B cell (primary cell): ENCODE measurements at regions of chr6 and their contacts with region 1.

Region 1: DNA sequence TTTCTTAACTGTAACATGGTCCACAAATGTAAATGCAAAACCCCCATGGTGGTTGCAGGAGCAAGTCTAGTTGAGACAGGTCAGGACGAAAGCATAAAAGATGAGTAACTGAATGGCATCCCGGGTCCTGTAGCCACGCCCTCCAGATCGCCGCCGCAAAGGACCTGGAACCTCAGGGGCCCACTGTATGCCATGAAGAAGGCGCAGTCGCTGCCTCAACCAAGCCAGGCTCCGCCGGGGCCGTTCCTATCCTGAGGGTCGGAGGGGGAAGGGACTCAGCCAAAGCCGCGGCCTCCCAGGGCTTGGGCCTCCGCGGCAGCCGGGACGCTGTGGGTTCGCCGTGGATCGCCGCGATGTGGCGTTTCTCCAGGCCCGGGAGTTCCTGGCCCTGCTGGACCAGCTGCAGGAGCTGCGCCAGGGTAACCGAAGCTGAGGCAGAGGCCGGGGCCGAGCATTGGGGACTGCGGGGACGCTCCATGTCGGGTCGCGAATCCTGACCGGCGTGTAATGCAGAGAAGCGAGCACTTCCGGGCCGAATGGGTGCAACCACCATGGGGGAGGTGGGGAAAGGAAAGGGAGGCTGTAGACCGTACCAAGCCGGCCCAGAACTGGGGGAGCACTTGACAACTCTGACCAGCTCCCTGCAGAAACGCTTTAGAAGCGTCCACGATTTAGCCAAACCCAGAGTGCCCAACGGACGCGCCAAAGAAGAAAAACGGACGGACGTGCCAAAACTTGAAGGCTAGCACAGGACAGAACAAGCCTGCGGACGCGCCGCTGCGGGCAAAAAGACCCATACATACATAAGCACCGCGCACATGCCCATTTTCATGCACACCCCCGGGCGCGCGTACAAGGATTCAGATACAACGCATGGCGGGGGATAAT is 11.1 kb downstream of the RPL7L1 start:
- DNase-seq: peak; percentile 93
- ATAC-seq: peak; percentile 98
- H3K4me3 ChIP-seq: peak overlapping the region; percentile 76 to 94 (median 87)
- H3K4me3 Mint-ChIP-seq: peak overlapping the region; percentile 92
- H3K27ac ChIP-seq: peak overlapping the region; percentile 77 to 89
- H3K27ac Mint-ChIP-seq: peak overlapping the region; percentile 92
- H3K4me1 ChIP-seq: peaks cover 26 to 33% of the 10 kb centered on the region in 2 donors
- H3K4me1 Mint-ChIP-seq: peaks cover 38% of the 10 kb centered on the region
- H3K27me3 ChIP-seq: no peaks in the 10 kb centered on the region
- H3K27me3 Mint-ChIP-seq: no peaks in the 10 kb centered on the region
- CTCF ChIP-seq: no peak

Region 2: GRCh38 chr6:42043787-42044475 is 846.6 kb before region 1 on chr6:
- CTCF ChIA-PET with region 1: no interaction called
- POLR2A ChIA-PET with region 1: no interaction called
- intact Hi-C with region 1: no loop called
- DNase-seq: peak; percentile 87
- ATAC-seq: peak; percentile 32
- H3K4me3 ChIP-seq: peak overlapping the region in 1 of 5 experiments; percentile 23
- H3K4me3 Mint-ChIP-seq: peak overlapping the region; percentile 69
- H3K27ac ChIP-seq: peak overlapping the region; percentile 26 to 56
- H3K27ac Mint-ChIP-seq: peak overlapping the region; percentile 88
- H3K4me1 ChIP-seq: peaks cover 67 to 80% of the 10 kb centered on the region in 2 donors
- H3K4me1 Mint-ChIP-seq: peaks cover 82% of the 10 kb centered on the region
- H3K27me3 ChIP-seq: no peaks in the 10 kb centered on the region
- H3K27me3 Mint-ChIP-seq: no peaks in the 10 kb centered on the region
- CTCF ChIP-seq: peak; percentile 89

Region 3: DNA sequence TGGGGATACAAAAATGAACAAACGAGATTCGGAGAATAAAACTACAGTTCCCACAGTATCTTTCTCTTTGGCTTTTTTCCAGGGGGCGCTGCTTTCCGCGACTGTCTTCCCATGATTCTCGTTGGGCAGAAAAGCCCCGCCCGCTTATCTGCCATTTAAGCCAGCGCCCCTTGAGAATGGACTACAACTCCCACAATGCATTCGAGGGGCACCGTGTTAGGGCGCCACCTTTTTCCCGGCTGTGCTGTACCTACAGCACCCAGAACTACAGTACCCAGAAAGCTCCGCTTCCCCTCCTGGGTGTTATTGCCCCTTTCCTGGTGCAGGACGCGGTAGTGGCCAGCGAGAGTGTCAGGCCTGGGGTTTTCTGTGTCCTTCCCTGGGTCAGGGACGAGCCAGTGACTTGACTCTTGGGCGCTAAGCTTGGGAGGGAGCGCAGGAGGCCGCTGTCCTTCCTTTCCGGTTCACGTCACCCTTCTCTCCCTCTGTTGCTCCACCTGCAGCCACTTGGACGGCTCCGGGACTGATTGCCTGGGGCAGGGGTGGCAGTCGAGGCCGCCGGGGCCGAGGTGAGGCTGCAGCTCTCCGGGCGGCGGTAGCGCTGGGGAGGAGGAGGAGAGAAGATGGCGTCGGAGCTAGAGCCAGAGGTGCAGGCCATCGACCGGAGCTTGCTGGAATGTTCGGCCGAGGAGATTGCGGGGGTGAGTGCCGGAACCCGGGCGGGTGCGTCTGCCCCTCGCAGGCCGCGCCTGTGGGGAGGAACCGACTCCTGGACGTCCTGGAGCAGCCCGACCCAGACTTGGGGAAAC is 326.7 kb before region 1 on chr6 and contains the start of gene UBR2:
- CTCF ChIA-PET with region 1: no interaction called
- POLR2A ChIA-PET with region 1: no interaction called
- intact Hi-C with region 1: loop called (anchors 5 kb)
- DNase-seq: peak; percentile 95
- ATAC-seq: peak; percentile 96
- H3K4me3 ChIP-seq: peak within 1 kb of the TSS; percentile 78 to 98 (median 91)
- H3K4me3 Mint-ChIP-seq: peak within 1 kb of the TSS; percentile 98
- H3K27ac ChIP-seq: peak within 1 kb of the TSS; percentile 90 to 91
- H3K27ac Mint-ChIP-seq: peak within 1 kb of the TSS; percentile 98
- H3K4me1 ChIP-seq: peaks cover 19 to 25% of the 10 kb centered on the region in 2 donors
- H3K4me1 Mint-ChIP-seq: peaks cover 36% of the 10 kb centered on the region
- H3K27me3 ChIP-seq: no peaks in the 10 kb centered on the region
- H3K27me3 Mint-ChIP-seq: no peaks in the 10 kb centered on the region
- CTCF ChIP-seq: peak; percentile 41
- total RNA-seq, gene UBR2: 56.2 and 61.5 TPM in 2 replicates

Region 4: DNA sequence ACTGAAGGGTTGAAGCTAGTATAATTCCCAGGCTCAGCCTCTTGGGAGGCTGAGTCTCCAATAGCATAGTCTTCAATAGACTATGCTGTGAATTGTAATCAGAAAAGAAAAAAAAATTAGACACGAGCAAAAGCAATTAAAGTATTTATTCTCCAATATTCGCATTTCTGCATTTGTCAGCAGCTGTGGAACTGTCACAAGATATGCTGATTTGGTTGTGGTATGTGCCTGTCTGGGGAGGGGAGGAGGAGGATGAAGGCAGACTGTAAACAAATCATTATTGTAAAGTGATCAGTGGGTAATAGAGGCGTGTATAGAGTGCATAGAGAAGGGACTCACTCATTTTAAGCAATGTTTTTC is 118.8 kb before region 1 on chr6:
- CTCF ChIA-PET with region 1: no interaction called
- POLR2A ChIA-PET with region 1: no interaction called
- intact Hi-C with region 1: loop called (anchors 5 kb)
- DNase-seq: peak; percentile 68
- ATAC-seq: no peak
- H3K4me3 ChIP-seq: peak overlapping the region; percentile 30 to 77 (median 49)
- H3K4me3 Mint-ChIP-seq: peak overlapping the region; percentile 87
- H3K27ac ChIP-seq: peak overlapping the region; percentile 90 to 92
- H3K27ac Mint-ChIP-seq: peak overlapping the region; percentile 99
- H3K4me1 ChIP-seq: peaks cover 39 to 52% of the 10 kb centered on the region in 2 donors
- H3K4me1 Mint-ChIP-seq: peaks cover 52% of the 10 kb centered on the region
- H3K27me3 ChIP-seq: no peaks in the 10 kb centered on the region
- H3K27me3 Mint-ChIP-seq: no peaks in the 10 kb centered on the region
- CTCF ChIP-seq: no peak

Region 5: GRCh38 chr6:42782622-42783176 is 107.9 kb before region 1 on chr6:
- CTCF ChIA-PET with region 1: no interaction called
- POLR2A ChIA-PET with region 1: interaction called, 17 read pairs
- intact Hi-C with region 1: no loop called
- DNase-seq: peak; percentile 88
- ATAC-seq: peak; percentile 48
- H3K4me3 ChIP-seq: peak overlapping the region; percentile 55 to 99 (median 96)
- H3K4me3 Mint-ChIP-seq: peak overlapping the region; percentile 93
- H3K27ac ChIP-seq: peak overlapping the region; percentile 99 to 100
- H3K27ac Mint-ChIP-seq: peak overlapping the region; percentile 100
- H3K4me1 ChIP-seq: peaks cover 54 to 57% of the 10 kb centered on the region in 2 donors
- H3K4me1 Mint-ChIP-seq: peaks cover 41% of the 10 kb centered on the region
- H3K27me3 ChIP-seq: no peaks in the 10 kb centered on the region
- H3K27me3 Mint-ChIP-seq: no peaks in the 10 kb centered on the region
- CTCF ChIP-seq: no peak

Region 6: DNA sequence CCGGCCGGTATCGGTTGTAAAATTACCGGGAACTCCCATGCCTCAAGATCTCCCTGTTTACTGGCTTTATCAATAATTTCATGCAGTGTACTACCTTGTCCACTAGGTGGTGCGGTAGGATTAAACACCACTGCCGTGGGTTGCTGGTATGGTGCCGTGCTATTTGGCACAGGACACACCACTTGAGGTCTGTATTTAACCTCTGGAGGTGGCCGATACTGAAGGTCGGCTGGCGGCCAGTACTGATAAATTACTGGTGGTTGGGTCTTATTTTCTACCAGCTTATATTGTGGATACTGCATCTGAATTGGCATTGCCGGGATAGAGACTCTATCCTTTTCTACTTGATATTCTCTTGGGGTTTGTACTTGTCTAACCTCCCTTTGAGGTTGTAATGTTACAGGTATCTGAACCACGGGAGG is 11.0 kb after region 1 on chr6:
- CTCF ChIA-PET with region 1: interaction called, 20 read pairs
- POLR2A ChIA-PET with region 1: no interaction called
- intact Hi-C with region 1: loop called (anchors 1 kb)
- DNase-seq: peak; percentile 88
- ATAC-seq: peak; percentile 99
- H3K4me3 ChIP-seq: no peak overlapping the region
- H3K4me3 Mint-ChIP-seq: no peak overlapping the region
- H3K27ac ChIP-seq: no peak overlapping the region
- H3K27ac Mint-ChIP-seq: no peak overlapping the region
- H3K4me1 ChIP-seq: peaks cover 5 to 8% of the 10 kb centered on the region in 2 donors
- H3K4me1 Mint-ChIP-seq: peaks cover 10% of the 10 kb centered on the region
- H3K27me3 ChIP-seq: no peaks in the 10 kb centered on the region
- H3K27me3 Mint-ChIP-seq: no peaks in the 10 kb centered on the region
- CTCF ChIP-seq: peak; percentile 93

Region 7: GRCh38 chr6:43059168-43060033 is 168.8 kb after region 1 on chr6 and contains the starts of genes KLC4 and MRPL2:
- CTCF ChIA-PET with region 1: no interaction called
- POLR2A ChIA-PET with region 1: no interaction called
- intact Hi-C with region 1: loop called (anchors 1 kb)
- DNase-seq: peak; percentile 98
- ATAC-seq: peak; percentile 96
- H3K4me3 ChIP-seq: peak within 1 kb of the TSS; percentile 76 to 96 (median 89)
- H3K4me3 Mint-ChIP-seq: peak within 1 kb of the TSS; percentile 99
- H3K27ac ChIP-seq: peak within 1 kb of the TSS; percentile 76 to 86
- H3K27ac Mint-ChIP-seq: peak within 1 kb of the TSS; percentile 100
- H3K4me1 ChIP-seq: peaks cover 17 to 23% of the 10 kb centered on the region in 2 donors
- H3K4me1 Mint-ChIP-seq: peaks cover 38% of the 10 kb centered on the region
- H3K27me3 ChIP-seq: no peaks in the 10 kb centered on the region
- H3K27me3 Mint-ChIP-seq: no peaks in the 10 kb centered on the region
- CTCF ChIP-seq: no peak
- total RNA-seq, gene KLC4: 52.7 and 61.9 TPM in 2 replicates
- total RNA-seq, gene MRPL2: 43.8 and 45.6 TPM in 2 replicates